SK-N-SH (cell line): ENCODE measurements at regions of chr1 and their contacts with region 1.

Region 1: GRCh38 chr1:145978854-145979759 is 14.6 kb downstream of the POLR3GL start:
- DNase-seq: peak; percentile 82
- H3K4me3 ChIP-seq: peak overlapping the region; percentile 18 to 45; a peak in 3 of 4 replicates
- H3K27ac ChIP-seq: peak overlapping the region; percentile 92 to 99
- H3K4me1 ChIP-seq: peaks cover 27 to 30% of the 10 kb centered on the region in 2 experiments
- H3K27me3 ChIP-seq: no peaks in the 10 kb centered on the region
- CTCF ChIP-seq: peak; percentile 48
- EP300 ChIP-seq: peak; percentile 58 to 74; a peak in 2 of 4 replicates
- RAD21 ChIP-seq: no peak

Region 2: DNA sequence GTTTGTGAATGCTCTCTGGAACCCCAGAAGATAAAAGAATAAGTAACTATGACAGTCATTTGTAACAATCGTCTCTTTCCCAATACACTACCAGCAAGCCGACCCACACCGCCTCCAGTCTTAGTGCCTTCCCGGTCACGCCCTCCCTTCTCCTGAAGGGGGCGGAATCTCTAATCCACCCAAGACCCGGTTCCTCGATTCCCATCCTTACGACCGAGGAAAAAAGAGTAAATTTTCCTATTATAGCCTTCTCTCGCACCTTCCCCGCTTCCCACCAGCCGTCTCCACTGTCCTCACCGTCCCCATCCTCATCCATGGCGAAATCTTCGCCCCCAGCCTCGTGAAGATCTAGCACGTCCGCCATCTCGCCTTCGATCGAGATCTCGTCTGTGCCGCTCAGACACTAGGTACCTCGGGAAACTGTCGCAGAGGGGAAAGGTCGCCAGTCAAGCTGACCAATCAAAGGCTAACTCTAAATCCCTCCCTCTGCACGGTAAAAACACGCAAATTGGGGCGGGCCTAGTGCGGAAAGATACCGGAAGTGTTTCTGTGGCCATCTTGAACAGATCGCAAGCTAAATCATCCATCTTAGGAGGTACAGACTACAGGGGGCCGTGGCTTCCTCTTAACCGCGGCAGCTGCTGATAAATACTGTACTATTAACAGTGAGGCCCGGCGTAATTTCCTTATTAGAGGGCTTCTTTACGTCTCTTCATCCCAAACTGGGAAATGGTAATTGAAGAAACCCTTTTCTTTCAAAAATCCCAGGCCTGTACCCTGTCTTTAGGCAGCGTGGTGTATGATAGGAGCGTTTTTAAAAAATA is 51.8 kb before region 1 on chr1 and contains the start of gene RBM8A:
- CTCF ChIA-PET with region 1: interaction called, 11 read pairs
- POLR2A ChIA-PET with region 1: interaction called, 3 read pairs
- DNase-seq: peak; percentile 83
- H3K4me3 ChIP-seq: peak within 1 kb of the TSS; percentile 80 to 82
- H3K27ac ChIP-seq: peak within 1 kb of the TSS; percentile 95 to 96
- H3K4me1 ChIP-seq: peaks cover 7% of the 10 kb centered on the region in 2 experiments
- H3K27me3 ChIP-seq: no peaks in the 10 kb centered on the region
- CTCF ChIP-seq: peak; percentile 75
- EP300 ChIP-seq: 0 out of 4 replicates have a peak, but pooled peaks of 1 of the 2 experiments have one; percentile 1
- RAD21 ChIP-seq: peak; percentile 23; the same call in 1 of the 2 replicates
- polyA plus RNA-seq, gene RBM8A: 236 TPM in 2 replicates

Region 3: GRCh38 chr1:145996433-145997015 is 17.4 kb after region 1 on chr1 and contains the start of gene TXNIP:
- CTCF ChIA-PET with region 1: interaction called, 99 read pairs
- POLR2A ChIA-PET with region 1: interaction called, 7 read pairs
- DNase-seq: peak; percentile 95
- H3K4me3 ChIP-seq: peak within 1 kb of the TSS; percentile 64 to 90
- H3K27ac ChIP-seq: peak within 1 kb of the TSS; percentile 44 to 98
- H3K4me1 ChIP-seq: peaks cover 14 to 45% of the 10 kb centered on the region in 2 experiments; a peak in 3 of 4 replicates
- H3K27me3 ChIP-seq: no peaks in the 10 kb centered on the region
- CTCF ChIP-seq: no peak
- EP300 ChIP-seq: peak; percentile 55 to 59; a peak in 3 of 4 replicates
- RAD21 ChIP-seq: no peak
- polyA plus RNA-seq, gene TXNIP: 44.6 and 77.3 TPM in 2 replicates

Region 4: DNA sequence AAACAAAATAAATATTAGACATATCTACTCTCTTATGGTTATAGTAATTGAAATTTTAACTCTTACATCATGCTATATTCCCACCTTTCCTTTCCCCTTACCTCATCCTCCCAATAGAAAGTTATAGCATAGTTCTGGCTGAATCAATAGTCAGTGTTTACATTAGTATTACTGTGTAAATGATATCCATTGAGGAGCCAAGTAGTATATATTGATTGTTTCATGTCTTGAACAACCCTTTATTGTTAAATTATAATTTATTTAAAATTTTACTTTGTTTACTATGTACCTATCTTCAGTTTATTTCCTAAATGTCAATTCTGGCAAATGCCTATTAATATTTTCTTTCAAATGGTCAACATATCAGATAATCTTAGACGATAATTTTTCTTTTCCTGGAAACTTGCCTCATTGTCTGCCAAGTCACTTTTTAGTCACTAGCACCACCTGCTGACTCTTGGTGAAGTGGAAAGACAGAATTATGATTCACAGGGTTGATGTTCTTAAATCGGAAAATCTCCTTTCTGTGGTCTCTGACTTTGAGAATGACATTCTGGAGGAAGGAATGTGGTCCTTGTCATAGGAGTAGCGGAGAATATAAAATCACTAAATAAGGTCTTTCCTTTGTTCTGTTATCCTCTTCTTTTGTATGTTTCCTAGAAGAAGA is 33.8 kb after region 1 on chr1:
- CTCF ChIA-PET with region 1: interaction called, 187 read pairs
- POLR2A ChIA-PET with region 1: no interaction called
- DNase-seq: peak; percentile 66
- H3K4me3 ChIP-seq: peak overlapping the region in 1 of 2 experiments; percentile 18; a peak in 1 of 4 replicates
- H3K27ac ChIP-seq: peak overlapping the region in 1 of 2 experiments; percentile 61; a peak in 2 of 4 replicates
- H3K4me1 ChIP-seq: peaks cover 0 to 2% of the 10 kb centered on the region in 2 experiments; a peak in 2 of 4 replicates
- H3K27me3 ChIP-seq: no peaks in the 10 kb centered on the region
- CTCF ChIP-seq: peak; percentile 87
- EP300 ChIP-seq: 0 out of 4 replicates have a peak, but pooled peaks of 1 of the 2 experiments have one; percentile 16
- RAD21 ChIP-seq: peak; percentile 95

Region 5: DNA sequence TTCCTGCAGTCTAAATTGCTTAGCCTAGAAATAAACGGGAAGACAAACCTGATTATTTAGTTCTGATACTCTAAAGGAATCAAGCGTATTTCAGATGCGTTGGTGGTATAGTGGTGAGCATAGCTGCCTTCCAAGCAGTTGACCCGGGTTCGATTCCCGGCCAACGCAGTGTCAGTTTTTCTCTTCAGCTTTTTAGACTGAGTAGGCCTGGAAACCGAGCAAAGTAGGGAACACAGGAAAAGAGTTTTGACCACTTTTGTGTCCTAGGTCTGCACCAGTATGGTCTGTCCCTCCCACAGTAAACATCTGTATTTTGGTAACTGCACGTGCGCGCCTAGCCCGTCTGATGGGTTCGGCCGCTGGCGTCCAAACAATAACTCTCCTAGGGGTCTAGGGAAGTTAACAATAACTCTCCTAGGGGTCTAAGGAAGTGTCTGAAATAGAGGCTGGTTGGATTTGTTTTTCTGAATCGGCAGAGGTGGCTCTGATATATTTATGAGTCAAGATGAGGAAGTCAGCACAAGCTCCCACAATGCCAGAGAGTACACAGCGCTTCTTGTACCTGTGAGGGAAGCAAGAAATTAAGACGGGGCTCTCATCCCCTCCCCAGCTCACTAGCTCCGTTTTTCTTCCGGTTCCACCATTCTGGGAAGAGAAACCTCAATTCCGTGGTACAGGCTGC is 58.0 kb after region 1 on chr1:
- CTCF ChIA-PET with region 1: interaction called, 13 read pairs
- POLR2A ChIA-PET with region 1: interaction called, 4 read pairs
- DNase-seq: no peak
- H3K4me3 ChIP-seq: peak overlapping the region; percentile 64 to 91
- H3K27ac ChIP-seq: peak overlapping the region; percentile 78 to 88
- H3K4me1 ChIP-seq: peaks cover 0 to 3% of the 10 kb centered on the region in 2 experiments; a peak in 2 of 4 replicates
- H3K27me3 ChIP-seq: no peaks in the 10 kb centered on the region
- CTCF ChIP-seq: no peak
- EP300 ChIP-seq: peak in 1 of 2 experiments; percentile 17; a peak in 1 of 4 replicates
- RAD21 ChIP-seq: no peak